Sigmoid colon (tissue), 7 donors: ENCODE measurements at regions of chr9 and their contacts with region 1.

Region 1: DNA sequence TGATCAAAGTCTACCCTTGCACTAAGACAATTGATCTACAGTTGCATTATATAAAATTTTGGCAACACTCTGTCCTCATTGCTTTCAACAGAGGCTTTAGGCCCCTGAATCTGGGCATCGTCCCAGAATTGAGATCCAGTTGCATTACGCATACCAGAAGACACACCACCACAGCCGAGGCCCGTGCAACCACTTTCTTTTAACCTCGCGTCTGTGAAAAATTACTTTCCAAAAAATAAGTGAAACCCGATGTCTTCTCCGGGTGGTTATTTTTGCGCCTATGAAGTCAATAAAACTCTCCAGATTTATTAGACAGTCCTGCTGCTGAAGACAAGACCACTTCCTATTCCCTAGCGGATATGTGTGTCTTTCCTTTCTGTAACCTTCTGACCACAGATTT is 52.1 kb upstream of the NFIB start:
- DNase-seq: peak; percentile 86
- H3K4me3 ChIP-seq: peak overlapping the region in 1 of 4 donors; percentile 6
- H3K27ac ChIP-seq: peak overlapping the region; percentile 31 to 78 (median 57)
- H3K4me1 ChIP-seq: peaks cover 0 to 58% (median 42%) of the 10 kb centered on the region in 4 donors
- H3K27me3 ChIP-seq: no peaks in the 10 kb centered on the region
- CTCF ChIP-seq: no peak
- EP300 ChIP-seq: no peak
- POLR2A ChIP-seq: no peak

Region 2: GRCh38 chr9:13568841-13569601 is 797.1 kb before region 1 on chr9:
- intact Hi-C with region 1: loop called (anchors 10 kb)
- DNase-seq: peak; percentile 58
- H3K4me3 ChIP-seq: peak overlapping the region in 3 of 4 donors; percentile 28 to 34 (median 29)
- H3K27ac ChIP-seq: peak overlapping the region; percentile 61 to 74 (median 66)
- H3K4me1 ChIP-seq: peaks cover 0 to 27% (median 15%) of the 10 kb centered on the region in 4 donors
- H3K27me3 ChIP-seq: no peaks in the 10 kb centered on the region
- CTCF ChIP-seq: no peak
- EP300 ChIP-seq: no peak
- POLR2A ChIP-seq: no peak

Region 3: DNA sequence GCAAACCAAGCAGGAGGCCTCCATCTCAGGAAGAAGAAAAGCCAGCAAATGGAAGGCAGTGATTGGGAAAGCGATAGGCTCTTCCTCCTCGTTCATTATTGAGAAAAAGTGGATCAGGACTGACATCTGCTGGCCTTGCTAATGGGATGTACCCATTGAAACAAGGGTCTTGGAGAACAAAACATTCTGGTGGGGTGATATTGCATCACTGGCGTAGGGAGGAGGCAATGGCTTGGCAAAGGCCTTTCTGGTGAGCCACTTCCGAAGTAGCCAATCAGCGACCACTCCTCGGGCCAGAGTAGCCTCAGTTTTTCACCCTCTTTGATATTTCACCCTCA is 34.6 kb after region 1 on chr9:
- intact Hi-C with region 1: loop called (anchors 2 kb)
- DNase-seq: peak; percentile 80
- H3K4me3 ChIP-seq: no peak overlapping the region
- H3K27ac ChIP-seq: no peak overlapping the region
- H3K4me1 ChIP-seq: peaks cover 0 to 17% (median 7%) of the 10 kb centered on the region in 4 donors
- H3K27me3 ChIP-seq: no peaks in the 10 kb centered on the region
- CTCF ChIP-seq: peak in 3 of 4 experiments; percentile 41 to 54 (median 44)
- EP300 ChIP-seq: no peak
- POLR2A ChIP-seq: no peak

Region 4: GRCh38 chr9:14515571-14516198 is 149.6 kb after region 1 on chr9:
- intact Hi-C with region 1: no loop called
- DNase-seq: peak; percentile 77
- H3K4me3 ChIP-seq: no peak overlapping the region
- H3K27ac ChIP-seq: no peak overlapping the region
- H3K4me1 ChIP-seq: no peaks in the 10 kb centered on the region
- H3K27me3 ChIP-seq: no peaks in the 10 kb centered on the region
- CTCF ChIP-seq: no peak
- EP300 ChIP-seq: no peak
- POLR2A ChIP-seq: no peak